AG04450 (cell line): ENCODE measurements at regions of chr6 and their contacts with region 1.

Region 1: DNA sequence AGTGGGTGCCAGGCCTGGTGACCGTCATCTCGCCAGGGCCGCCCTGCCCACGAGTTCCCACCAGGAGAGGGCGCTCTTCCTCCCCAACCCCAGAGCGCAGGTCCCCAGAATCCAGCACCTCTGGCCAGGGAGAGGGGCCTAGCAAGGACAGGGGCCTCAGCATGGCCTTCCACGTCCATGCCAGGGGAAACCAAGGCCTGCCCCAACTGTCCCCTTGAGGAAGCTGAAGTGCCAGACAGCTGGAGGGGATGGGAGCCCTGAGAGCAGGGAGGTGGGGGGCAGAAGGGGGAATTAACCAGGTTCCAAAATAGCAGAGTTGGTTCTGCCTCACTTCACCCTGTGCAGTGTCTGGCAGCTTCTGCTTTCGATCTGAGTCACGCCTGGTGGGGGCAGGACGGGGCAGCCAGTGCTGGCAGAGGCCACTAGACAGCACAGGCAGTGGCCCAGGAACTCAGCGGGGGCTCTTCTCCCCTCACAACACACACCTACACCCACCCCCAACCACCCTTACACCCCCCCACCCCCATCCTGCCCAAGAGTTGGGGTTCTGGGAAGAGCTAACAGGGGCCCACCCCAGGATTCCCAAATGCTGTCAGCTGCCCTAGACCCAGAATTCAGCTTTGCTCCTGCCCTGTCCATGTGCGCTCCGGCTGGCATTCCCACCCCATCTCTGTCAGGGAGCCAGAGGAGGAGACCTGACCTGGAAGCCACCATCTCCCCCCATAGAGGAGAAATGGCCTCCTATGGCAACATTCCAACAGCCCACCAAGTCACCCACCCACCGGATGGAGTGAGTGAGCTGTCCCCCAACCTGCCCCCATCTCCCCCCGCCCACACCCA is 29.2 kb downstream of the TFEB start:
- DNase-seq: no peak
- H3K4me3 ChIP-seq: no peak overlapping the region
- H3K27ac ChIP-seq: peak overlapping the region; percentile 47
- H3K27me3 ChIP-seq: no peaks in the 10 kb centered on the region
- CTCF ChIP-seq: peak; percentile 71

Region 2: GRCh38 chr6:41150669-41151068 is 555.5 kb before region 1 on chr6:
- CTCF ChIA-PET with region 1: no interaction called
- POLR2A ChIA-PET with region 1: no interaction called
- DNase-seq: no peak
- H3K4me3 ChIP-seq: no peak overlapping the region
- H3K27ac ChIP-seq: no peak overlapping the region
- H3K27me3 ChIP-seq: peaks cover 2% of the 10 kb centered on the region
- CTCF ChIP-seq: no peak

Region 3: GRCh38 chr6:41655711-41656691 is 50.2 kb before region 1 on chr6:
- CTCF ChIA-PET with region 1: interaction called, 11 read pairs
- POLR2A ChIA-PET with region 1: interaction called, 4 read pairs
- DNase-seq: peak; percentile 20
- H3K4me3 ChIP-seq: no peak overlapping the region
- H3K27ac ChIP-seq: no peak overlapping the region
- H3K27me3 ChIP-seq: peaks cover 39% of the 10 kb centered on the region
- CTCF ChIP-seq: no peak

Region 4: GRCh38 chr6:41716516-41717391 is 10.5 kb after region 1 on chr6:
- CTCF ChIA-PET with region 1: interaction called, 16 read pairs
- POLR2A ChIA-PET with region 1: interaction called, 3 read pairs
- DNase-seq: no peak
- H3K4me3 ChIP-seq: no peak overlapping the region
- H3K27ac ChIP-seq: no peak overlapping the region
- H3K27me3 ChIP-seq: no peaks in the 10 kb centered on the region
- CTCF ChIP-seq: no peak

Region 5: GRCh38 chr6:41723530-41724227 is 17.5 kb after region 1 on chr6:
- CTCF ChIA-PET with region 1: interaction called, 13 read pairs
- POLR2A ChIA-PET with region 1: no interaction called
- DNase-seq: peak; percentile 65
- H3K4me3 ChIP-seq: peak overlapping the region; percentile 40
- H3K27ac ChIP-seq: peak overlapping the region; percentile 87
- H3K27me3 ChIP-seq: no peaks in the 10 kb centered on the region
- CTCF ChIP-seq: no peak